Naive thymus-derived CD4-positive, alpha-beta T cell (primary cell): ENCODE measurements at regions of chr9 and their contacts with region 1.

Region 1: DNA sequence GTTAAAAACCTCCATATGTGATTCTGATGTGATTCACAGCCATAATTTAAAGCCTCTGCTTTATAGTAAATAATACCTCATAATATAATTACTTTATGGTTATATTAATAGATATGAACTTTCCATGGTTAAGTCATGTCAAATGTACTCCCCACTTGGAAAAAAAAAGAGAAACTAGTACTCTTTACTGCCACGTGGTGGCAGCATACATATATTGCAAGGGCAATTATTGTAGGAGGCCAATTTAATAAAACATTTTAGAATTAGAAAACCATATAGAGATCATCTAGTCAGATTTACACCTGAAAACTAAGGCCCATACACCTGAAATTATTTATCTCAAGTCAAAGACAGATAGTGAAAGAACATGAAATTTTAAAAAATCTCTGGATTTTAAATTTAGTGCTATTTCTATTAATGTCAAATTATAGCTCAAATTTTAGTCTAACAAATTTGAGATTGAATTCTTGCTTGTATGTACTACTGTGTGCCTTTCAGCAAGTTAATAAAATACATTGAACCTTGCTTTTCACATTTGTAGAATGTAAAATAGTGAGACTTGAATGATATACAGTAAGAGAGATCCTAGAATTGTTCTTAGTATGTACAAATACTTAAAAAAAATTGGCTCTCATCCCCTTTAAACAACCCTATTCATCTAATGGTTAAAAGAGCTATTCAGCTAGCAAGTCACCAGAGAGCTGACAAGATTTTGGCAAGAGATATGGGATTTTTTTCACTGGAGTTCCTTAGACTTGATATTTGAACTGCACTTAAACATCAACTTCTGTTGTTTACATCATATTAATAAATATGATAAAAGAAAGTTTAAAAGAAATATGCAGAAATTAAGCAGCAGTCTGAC is 603.8 kb downstream of the TLE4 start:
- DNase-seq: peak in 5 of 9 donors; percentile 4 to 25 (median 10)
- ATAC-seq: no peak
- H3K4me3 ChIP-seq: no peak overlapping the region
- H3K4me3 Mint-ChIP-seq: no peak overlapping the region
- H3K27ac ChIP-seq: no peak overlapping the region
- H3K27ac Mint-ChIP-seq: no peak overlapping the region
- H3K4me1 ChIP-seq: no peaks in the 10 kb centered on the region
- H3K4me1 Mint-ChIP-seq: no peaks in the 10 kb centered on the region
- H3K27me3 ChIP-seq: no peaks in the 10 kb centered on the region
- H3K27me3 Mint-ChIP-seq: peaks cover 0 to 7% (median 6%) of the 10 kb centered on the region in 5 donors

Region 2: DNA sequence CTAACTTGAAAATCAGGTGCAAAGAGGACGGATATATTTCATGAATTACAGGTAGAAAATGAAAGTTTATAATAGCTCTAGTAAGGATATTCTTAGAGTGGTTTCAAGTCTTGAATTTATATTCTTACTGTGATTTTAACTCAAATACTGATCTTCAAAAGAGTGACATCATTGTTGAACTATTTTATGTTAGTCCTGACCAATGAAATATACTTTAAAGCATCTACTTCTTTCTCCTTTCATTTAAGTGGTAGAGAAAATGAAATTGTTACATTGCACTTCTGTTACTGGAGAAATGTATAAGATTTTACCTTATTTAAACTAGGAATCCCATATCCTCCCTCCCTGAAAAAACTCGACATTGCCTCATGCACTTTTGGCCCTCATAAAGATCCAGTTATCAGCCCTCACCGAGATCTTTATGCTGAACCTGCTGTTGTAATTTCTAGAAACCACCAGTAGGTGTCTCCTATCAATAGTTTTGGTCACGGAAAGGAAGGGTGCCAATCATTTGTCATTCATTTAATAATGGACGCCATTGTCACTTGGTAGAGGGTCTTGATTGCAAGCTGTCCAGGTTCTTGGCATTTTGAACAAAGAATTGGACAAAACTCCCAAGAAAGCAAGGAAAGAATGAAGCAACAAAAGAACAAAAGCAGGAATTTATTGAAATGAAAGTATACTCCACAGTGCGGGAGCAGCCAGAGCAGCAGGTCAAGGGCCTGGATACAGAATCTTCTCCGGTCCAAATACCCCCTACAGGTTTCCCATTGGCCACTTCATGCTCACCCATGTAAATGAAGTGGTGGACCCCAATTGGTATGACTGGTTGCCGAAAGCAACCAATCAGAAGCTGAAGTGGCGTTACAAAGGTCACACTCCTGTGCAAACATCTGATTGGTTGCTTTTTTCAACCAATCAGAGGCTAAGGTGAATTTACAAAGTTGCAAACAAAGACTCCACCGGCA is 1354.4 kb before region 1 on chr9:
- CTCF ChIA-PET with region 1: no interaction called
- POLR2A ChIA-PET with region 1: no interaction called
- intact Hi-C with region 1: loop called in 1 of 2 experiments (anchors 2 kb)
- DNase-seq: peak in 5 of 9 donors; percentile 2 to 33 (median 12)
- ATAC-seq: peak; percentile 44
- H3K4me3 ChIP-seq: no peak overlapping the region
- H3K4me3 Mint-ChIP-seq: peak overlapping the region; percentile 43 to 81 (median 62)
- H3K27ac ChIP-seq: no peak overlapping the region
- H3K27ac Mint-ChIP-seq: no peak overlapping the region
- H3K4me1 ChIP-seq: no peaks in the 10 kb centered on the region
- H3K4me1 Mint-ChIP-seq: peaks cover 0 to 6% (median 5%) of the 10 kb centered on the region in 7 donors
- H3K27me3 ChIP-seq: no peaks in the 10 kb centered on the region
- H3K27me3 Mint-ChIP-seq: no peaks in the 10 kb centered on the region

Region 3: GRCh38 chr9:79403495-79403894 is 772.0 kb before region 1 on chr9:
- CTCF ChIA-PET with region 1: no interaction called
- POLR2A ChIA-PET with region 1: no interaction called
- intact Hi-C with region 1: loop called in 1 of 2 experiments (anchors 1 kb)
- DNase-seq: peak in 3 of 9 donors; percentile 10 to 20 (median 14)
- ATAC-seq: no peak
- H3K4me3 ChIP-seq: no peak overlapping the region
- H3K4me3 Mint-ChIP-seq: no peak overlapping the region
- H3K27ac ChIP-seq: no peak overlapping the region
- H3K27ac Mint-ChIP-seq: no peak overlapping the region
- H3K4me1 ChIP-seq: no peaks in the 10 kb centered on the region
- H3K4me1 Mint-ChIP-seq: no peaks in the 10 kb centered on the region
- H3K27me3 ChIP-seq: no peaks in the 10 kb centered on the region
- H3K27me3 Mint-ChIP-seq: peaks cover 0 to 5% (median 0%) of the 10 kb centered on the region in 5 donors

Region 4: DNA sequence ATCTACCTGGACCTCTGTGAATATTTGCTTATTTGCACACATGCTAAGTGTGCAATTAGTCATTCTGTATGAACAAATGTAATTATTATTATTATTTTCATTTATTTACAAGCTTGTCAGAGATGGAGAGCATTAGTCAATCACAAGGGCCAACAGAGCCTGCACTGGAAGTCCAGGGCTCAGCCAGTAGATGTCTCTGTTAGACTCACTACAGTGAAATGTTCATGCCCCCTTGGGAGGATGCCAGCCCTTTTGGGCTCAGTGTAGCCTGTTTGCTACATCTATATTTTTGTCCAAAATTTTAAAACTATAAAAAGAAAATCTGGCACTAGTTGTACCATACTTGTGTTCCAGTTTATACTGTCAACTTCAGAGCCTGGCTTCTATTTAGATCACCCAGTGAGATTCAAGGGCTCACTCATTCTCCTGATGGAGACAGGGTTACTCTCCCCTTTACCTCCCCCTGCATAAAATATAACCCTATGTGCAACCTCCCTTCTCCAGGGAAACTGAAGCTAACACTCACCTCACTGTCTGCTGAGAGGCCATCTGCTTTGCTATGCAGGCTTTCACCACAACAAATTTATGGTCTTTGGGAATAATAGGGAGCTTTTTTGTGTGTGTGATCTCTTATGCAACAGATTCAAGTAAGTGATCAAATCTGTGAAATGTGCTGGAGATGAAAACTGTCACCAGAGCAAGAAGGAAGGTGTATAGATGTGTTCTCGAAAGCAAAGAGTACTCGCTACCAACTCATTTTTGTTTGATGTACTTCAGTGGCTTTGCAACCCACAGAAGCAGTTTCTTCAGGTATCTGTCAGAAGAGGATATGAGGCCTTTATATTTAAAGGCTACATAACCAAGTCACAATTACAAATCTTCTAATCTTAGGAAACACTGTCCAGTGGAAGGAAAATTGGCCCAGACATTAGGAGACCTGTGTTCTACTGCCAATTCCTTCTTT is 703.7 kb before region 1 on chr9:
- CTCF ChIA-PET with region 1: no interaction called
- POLR2A ChIA-PET with region 1: no interaction called
- intact Hi-C with region 1: loop called (anchors 1 to 5 kb)
- DNase-seq: peak in 6 of 9 donors; percentile 12 to 43 (median 18)
- ATAC-seq: peak; percentile 56
- H3K4me3 ChIP-seq: no peak overlapping the region
- H3K4me3 Mint-ChIP-seq: no peak overlapping the region
- H3K27ac ChIP-seq: no peak overlapping the region
- H3K27ac Mint-ChIP-seq: peak overlapping the region in 3 of 9 donors; percentile 44 to 75 (median 45)
- H3K4me1 ChIP-seq: peaks cover 0 to 8% of the 10 kb centered on the region in 2 donors
- H3K4me1 Mint-ChIP-seq: peaks cover 0 to 30% (median 24%) of the 10 kb centered on the region in 7 donors
- H3K27me3 ChIP-seq: no peaks in the 10 kb centered on the region
- H3K27me3 Mint-ChIP-seq: no peaks in the 10 kb centered on the region

Region 5: GRCh38 chr9:79477955-79478771 is 697.4 kb before region 1 on chr9:
- CTCF ChIA-PET with region 1: interaction called, 3 read pairs
- POLR2A ChIA-PET with region 1: no interaction called
- intact Hi-C with region 1: loop called (anchors 2 to 5 kb)
- DNase-seq: peak in 6 of 9 donors; percentile 12 to 37 (median 22)
- ATAC-seq: peak; percentile 58
- H3K4me3 ChIP-seq: no peak overlapping the region
- H3K4me3 Mint-ChIP-seq: no peak overlapping the region
- H3K27ac ChIP-seq: no peak overlapping the region
- H3K27ac Mint-ChIP-seq: no peak overlapping the region
- H3K4me1 ChIP-seq: peaks cover 0 to 3% of the 10 kb centered on the region in 2 donors
- H3K4me1 Mint-ChIP-seq: peaks cover 0 to 5% (median 0%) of the 10 kb centered on the region in 7 donors
- H3K27me3 ChIP-seq: no peaks in the 10 kb centered on the region
- H3K27me3 Mint-ChIP-seq: no peaks in the 10 kb centered on the region

Region 6: DNA sequence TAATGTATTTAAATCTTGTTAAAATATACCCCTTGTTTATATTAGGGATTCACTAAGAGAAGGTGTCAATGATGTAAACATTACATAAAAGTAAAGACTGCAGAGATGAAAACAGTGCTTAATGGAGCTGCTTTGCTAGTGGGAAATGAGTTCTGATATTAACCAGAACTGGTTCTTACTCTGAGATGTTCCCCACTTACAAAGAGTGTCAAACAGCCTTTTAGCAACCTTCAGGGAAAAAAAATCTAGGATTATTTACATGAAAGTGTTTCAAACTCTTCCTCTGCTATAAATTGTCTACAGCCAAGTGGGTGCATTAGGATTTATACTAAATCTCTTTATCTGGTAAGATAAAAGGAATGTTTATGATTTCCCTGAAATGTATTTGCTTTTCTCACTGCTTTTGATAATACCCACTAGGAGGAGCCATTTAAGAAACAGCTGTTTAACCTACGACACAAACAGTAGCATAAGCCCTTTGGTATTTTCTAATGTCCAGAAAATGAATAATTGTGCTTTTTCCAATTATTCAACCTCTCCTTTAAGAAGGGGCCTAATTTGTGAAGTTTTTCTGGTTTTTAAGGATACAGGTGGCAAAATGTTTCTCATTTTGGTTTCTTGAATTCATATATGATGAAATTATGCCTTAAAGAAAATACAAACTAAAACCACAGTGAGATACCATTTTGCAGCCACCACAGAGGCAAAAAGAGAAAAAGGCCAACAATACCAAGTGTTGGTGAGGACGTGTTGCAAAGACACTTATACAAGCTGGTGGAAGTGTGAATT is 417.4 kb before region 1 on chr9:
- CTCF ChIA-PET with region 1: no interaction called
- POLR2A ChIA-PET with region 1: no interaction called
- intact Hi-C with region 1: loop called in 1 of 2 experiments (anchors 1 kb)
- DNase-seq: peak in 2 of 9 donors; percentile 3 to 11
- ATAC-seq: no peak
- H3K4me3 ChIP-seq: no peak overlapping the region
- H3K4me3 Mint-ChIP-seq: no peak overlapping the region
- H3K27ac ChIP-seq: no peak overlapping the region
- H3K27ac Mint-ChIP-seq: no peak overlapping the region
- H3K4me1 ChIP-seq: no peaks in the 10 kb centered on the region
- H3K4me1 Mint-ChIP-seq: peaks cover 0 to 4% (median 0%) of the 10 kb centered on the region in 7 donors
- H3K27me3 ChIP-seq: no peaks in the 10 kb centered on the region
- H3K27me3 Mint-ChIP-seq: peaks cover 0 to 2% (median 0%) of the 10 kb centered on the region in 5 donors

Region 7: GRCh38 chr9:80156756-80157472 is 18.6 kb before region 1 on chr9:
- CTCF ChIA-PET with region 1: no interaction called
- POLR2A ChIA-PET with region 1: no interaction called
- intact Hi-C with region 1: no loop called
- DNase-seq: no peak
- ATAC-seq: no peak
- H3K4me3 ChIP-seq: no peak overlapping the region
- H3K4me3 Mint-ChIP-seq: no peak overlapping the region
- H3K27ac ChIP-seq: no peak overlapping the region
- H3K27ac Mint-ChIP-seq: no peak overlapping the region
- H3K4me1 ChIP-seq: no peaks in the 10 kb centered on the region
- H3K4me1 Mint-ChIP-seq: no peaks in the 10 kb centered on the region
- H3K27me3 ChIP-seq: no peaks in the 10 kb centered on the region
- H3K27me3 Mint-ChIP-seq: peaks cover 0 to 10% (median 7%) of the 10 kb centered on the region in 5 donors

Region 8: GRCh38 chr9:80282766-80283165 is 107.2 kb after region 1 on chr9:
- CTCF ChIA-PET with region 1: no interaction called
- POLR2A ChIA-PET with region 1: no interaction called
- intact Hi-C with region 1: no loop called
- DNase-seq: no peak
- ATAC-seq: no peak
- H3K4me3 ChIP-seq: no peak overlapping the region
- H3K4me3 Mint-ChIP-seq: no peak overlapping the region
- H3K27ac ChIP-seq: no peak overlapping the region
- H3K27ac Mint-ChIP-seq: no peak overlapping the region
- H3K4me1 ChIP-seq: no peaks in the 10 kb centered on the region
- H3K4me1 Mint-ChIP-seq: no peaks in the 10 kb centered on the region
- H3K27me3 ChIP-seq: no peaks in the 10 kb centered on the region
- H3K27me3 Mint-ChIP-seq: peaks cover 0 to 3% (median 0%) of the 10 kb centered on the region in 5 donors

Region 9: DNA sequence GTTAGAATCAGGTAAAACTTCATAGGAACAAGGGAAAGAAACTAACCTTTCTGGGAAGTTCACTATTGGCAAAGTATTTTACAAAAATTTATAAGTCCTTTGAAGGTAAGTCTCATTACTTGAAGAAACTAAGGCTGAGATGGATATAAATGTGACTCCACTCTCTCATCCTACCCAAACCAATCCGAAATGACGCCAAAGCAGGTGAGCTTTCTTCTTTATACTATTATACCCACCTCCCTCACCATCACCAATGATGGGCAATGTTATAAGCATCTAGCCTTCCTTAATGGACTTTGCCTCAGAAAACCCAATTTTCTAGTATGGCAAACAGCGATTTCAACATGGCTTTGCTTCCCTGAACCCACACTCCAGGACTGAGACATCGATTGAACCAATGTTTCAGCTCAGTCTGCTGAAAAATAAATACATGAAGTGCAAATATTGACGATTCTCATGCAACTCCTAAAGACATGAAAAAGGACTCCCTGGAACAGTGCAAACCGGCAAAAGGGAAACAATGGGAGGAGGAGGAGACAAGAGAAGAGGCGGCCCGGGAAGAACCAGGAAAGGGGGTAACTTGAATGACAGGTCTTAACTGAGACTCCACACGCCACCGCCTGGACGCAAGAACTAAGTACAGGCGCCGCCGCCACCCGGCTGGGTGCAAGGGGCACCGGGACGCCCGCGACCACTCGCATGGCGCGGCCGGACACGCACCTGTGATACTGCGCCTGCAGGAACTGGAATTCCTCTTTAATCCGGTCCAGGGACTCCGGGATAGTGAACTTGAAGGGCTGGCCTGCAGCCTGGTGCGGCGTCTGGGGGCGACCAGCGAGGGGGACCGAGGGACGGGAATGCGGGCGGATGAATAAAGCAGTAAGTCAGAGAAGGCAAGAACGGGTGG is 1511.3 kb after region 1 on chr9:
- CTCF ChIA-PET with region 1: no interaction called
- POLR2A ChIA-PET with region 1: no interaction called
- intact Hi-C with region 1: loop called in 1 of 2 experiments (anchors 2 kb)
- DNase-seq: peak in 7 of 9 donors; percentile 9 to 37 (median 14)
- ATAC-seq: no peak
- H3K4me3 ChIP-seq: no peak overlapping the region
- H3K4me3 Mint-ChIP-seq: peak overlapping the region in 3 of 10 donors; percentile 72 to 84 (median 77)
- H3K27ac ChIP-seq: no peak overlapping the region
- H3K27ac Mint-ChIP-seq: peak overlapping the region in 2 of 9 donors; percentile 49 to 83
- H3K4me1 ChIP-seq: no peaks in the 10 kb centered on the region
- H3K4me1 Mint-ChIP-seq: peaks cover 7 to 27% (median 16%) of the 10 kb centered on the region in 7 donors
- H3K27me3 ChIP-seq: no peaks in the 10 kb centered on the region
- H3K27me3 Mint-ChIP-seq: peaks cover 4 to 23% (median 8%) of the 10 kb centered on the region in 5 donors